Caco-2 (cell line): ENCODE measurements at regions of chr7 and their contacts with region 1.

Region 1: DNA sequence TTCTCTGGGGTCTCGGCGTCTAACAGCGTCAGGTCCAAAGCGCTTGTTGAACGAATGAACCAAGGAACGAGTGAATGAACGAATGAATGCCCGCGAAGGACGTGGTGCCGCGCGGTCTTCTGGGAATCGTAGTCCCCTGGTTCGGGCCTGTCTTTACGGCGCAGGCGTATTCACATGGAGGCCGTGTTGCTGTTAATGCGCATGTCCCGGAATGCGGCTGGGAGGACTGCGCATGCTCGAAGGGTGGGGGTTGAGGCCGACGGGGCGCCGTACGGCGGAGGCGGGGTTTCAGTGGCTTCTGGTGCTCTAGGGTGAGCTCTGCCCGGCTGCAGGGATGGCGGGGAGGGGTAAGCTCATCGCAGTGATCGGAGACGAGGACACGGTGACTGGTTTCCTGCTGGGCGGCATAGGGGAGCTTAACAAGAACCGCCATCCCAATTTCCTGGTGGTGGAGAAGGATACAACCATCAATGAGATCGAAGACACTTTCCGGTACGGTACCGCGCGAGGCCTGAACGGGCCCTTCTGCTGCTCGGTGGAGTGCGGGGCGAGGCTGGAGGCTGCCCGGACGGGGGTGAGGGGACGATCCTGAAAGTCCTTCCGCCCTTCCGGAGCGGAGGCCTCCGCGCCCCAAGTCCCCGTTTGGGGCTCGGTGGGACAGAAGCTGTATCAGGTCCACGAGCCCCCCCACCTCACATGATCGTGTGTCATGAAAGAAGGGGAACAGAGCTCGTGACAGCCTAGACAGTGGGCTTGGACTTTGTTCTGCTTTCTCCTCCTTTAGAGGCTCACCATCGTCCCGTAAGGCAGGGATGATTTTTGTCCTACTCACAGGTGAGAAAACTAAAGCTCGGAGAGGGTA is at the start of gene ATP6V1F:
- DNase-seq: peak; percentile 98 to 99
- H3K4me3 ChIP-seq: peak within 1 kb of the TSS; percentile 93
- H3K4me3 Mint-ChIP-seq: peak within 1 kb of the TSS; percentile 84
- H3K27ac Mint-ChIP-seq: peak within 1 kb of the TSS; percentile 87
- H3K4me1 ChIP-seq: peaks cover 8% of the 10 kb centered on the region; the same call in 1 of the 2 replicates
- H3K4me1 Mint-ChIP-seq: peaks cover 12% of the 10 kb centered on the region
- H3K27me3 ChIP-seq: no peaks in the 10 kb centered on the region
- H3K27me3 Mint-ChIP-seq: no peaks in the 10 kb centered on the region
- CTCF ChIP-seq: no peak
- total RNA-seq, gene ATP6V1F: 162 and 168 TPM in 2 replicates

Region 2: GRCh38 chr7:128781851-128782250 is 81.0 kb before region 1 on chr7:
- CTCF ChIA-PET with region 1: no interaction called
- POLR2A ChIA-PET with region 1: no interaction called
- intact Hi-C with region 1: no loop called
- DNase-seq: no peak
- H3K4me3 ChIP-seq: no peak overlapping the region
- H3K4me3 Mint-ChIP-seq: no peak overlapping the region
- H3K27ac Mint-ChIP-seq: no peak overlapping the region
- H3K4me1 ChIP-seq: no peaks in the 10 kb centered on the region
- H3K4me1 Mint-ChIP-seq: no peaks in the 10 kb centered on the region
- H3K27me3 ChIP-seq: no peaks in the 10 kb centered on the region
- H3K27me3 Mint-ChIP-seq: peaks cover 4% of the 10 kb centered on the region
- CTCF ChIP-seq: no peak

Region 3: DNA sequence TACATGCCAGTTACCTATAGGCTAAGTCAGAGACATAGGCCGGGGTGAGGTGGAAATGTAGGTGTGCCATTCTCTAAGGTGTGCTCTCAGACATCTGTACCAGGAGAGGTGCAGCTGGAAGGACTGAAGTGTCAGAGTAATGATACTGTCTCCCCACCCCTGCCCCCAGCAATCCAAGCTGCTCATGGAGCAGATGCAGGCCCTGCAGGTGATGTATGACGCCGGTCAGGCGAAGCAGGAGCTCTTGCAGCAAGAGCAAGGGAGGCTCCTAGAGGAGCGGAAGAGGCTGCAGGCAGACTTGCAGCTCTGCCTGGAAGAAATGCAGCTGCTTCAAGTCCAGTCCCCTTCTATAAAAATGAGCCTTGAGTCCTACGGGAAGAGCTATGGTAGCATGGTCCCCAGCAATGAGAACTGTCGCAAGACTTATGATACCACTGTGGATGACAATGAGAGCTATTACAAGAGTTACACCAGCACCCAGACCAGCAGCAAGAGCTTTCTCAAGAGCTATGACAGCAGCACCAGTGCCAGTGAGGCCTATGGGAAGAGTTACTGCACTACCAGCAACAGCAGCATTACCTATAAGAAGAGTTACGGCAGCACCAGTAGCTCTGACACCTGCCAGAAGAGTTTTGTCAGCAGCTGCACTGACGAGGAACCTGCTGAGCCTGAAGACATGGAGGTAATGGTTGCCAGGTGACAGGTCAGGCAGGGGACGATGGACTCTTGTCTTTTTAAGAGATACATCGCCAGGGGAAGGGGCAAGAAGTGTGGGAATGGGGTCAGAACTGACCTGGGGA is 51.0 kb before region 1 on chr7:
- CTCF ChIA-PET with region 1: no interaction called
- POLR2A ChIA-PET with region 1: interaction called, 12 read pairs
- intact Hi-C with region 1: no loop called
- DNase-seq: no peak
- H3K4me3 ChIP-seq: no peak overlapping the region
- H3K4me3 Mint-ChIP-seq: no peak overlapping the region
- H3K27ac Mint-ChIP-seq: no peak overlapping the region
- H3K4me1 ChIP-seq: no peaks in the 10 kb centered on the region
- H3K4me1 Mint-ChIP-seq: peaks cover 6% of the 10 kb centered on the region
- H3K27me3 ChIP-seq: no peaks in the 10 kb centered on the region
- H3K27me3 Mint-ChIP-seq: peaks cover 11% of the 10 kb centered on the region
- CTCF ChIP-seq: no peak